Breast epithelium (tissue), 4 donors: ENCODE measurements at regions of chr2 and their contacts with region 1.

Region 1: DNA sequence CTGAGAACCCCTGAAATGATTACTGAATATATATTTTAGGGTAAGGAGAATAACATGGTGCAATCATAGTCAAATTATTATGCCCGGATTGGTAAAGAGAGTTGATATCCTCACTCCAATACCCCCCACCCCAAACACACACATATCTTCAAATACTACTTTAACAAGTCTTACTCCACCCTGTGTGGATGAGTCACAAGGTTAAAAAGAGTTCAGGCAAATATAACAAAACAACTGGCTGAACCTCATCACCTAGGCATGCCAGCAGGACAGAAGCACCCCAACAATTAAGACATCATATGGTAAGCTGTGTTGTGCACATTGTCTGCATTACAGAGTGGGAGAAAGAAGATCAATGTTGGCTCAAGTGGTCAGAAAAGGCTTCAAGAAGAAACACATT is 857.4 kb downstream of the TDRD15 start:
- DNase-seq: no peak
- H3K4me3 ChIP-seq: no peak overlapping the region
- H3K27ac ChIP-seq: no peak overlapping the region
- H3K4me1 ChIP-seq: no peaks in the 10 kb centered on the region
- H3K27me3 ChIP-seq: no peaks in the 10 kb centered on the region
- CTCF ChIP-seq: no peak
- POLR2A ChIP-seq: no peak

Region 2: GRCh38 chr2:22043784-22044183 is 62.7 kb after region 1 on chr2:
- intact Hi-C with region 1: no loop called
- DNase-seq: no peak
- H3K4me3 ChIP-seq: no peak overlapping the region
- H3K27ac ChIP-seq: no peak overlapping the region
- H3K4me1 ChIP-seq: no peaks in the 10 kb centered on the region
- H3K27me3 ChIP-seq: no peaks in the 10 kb centered on the region
- CTCF ChIP-seq: no peak
- POLR2A ChIP-seq: no peak

Region 3: GRCh38 chr2:22478329-22478728 is 497.2 kb after region 1 on chr2:
- intact Hi-C with region 1: loop called (anchors 10 kb)
- DNase-seq: no peak
- H3K4me3 ChIP-seq: no peak overlapping the region
- H3K27ac ChIP-seq: no peak overlapping the region
- H3K4me1 ChIP-seq: peaks cover 3 to 4% of the 10 kb centered on the region in 2 donors
- H3K27me3 ChIP-seq: peaks cover 0 to 4% of the 10 kb centered on the region in 2 donors
- CTCF ChIP-seq: no peak
- POLR2A ChIP-seq: no peak